Head of caudate nucleus (tissue), 42 donors: ENCODE measurements at regions of chr11 and their contacts with region 1.

Region 1: GRCh38 chr11:62394825-62395538 is 23.9 kb upstream of the SCGB1A1 start:
- DNase-seq: peak; percentile 61 to 91 (median 78)

Region 2: GRCh38 chr11:62340269-62340901 is 54.6 kb before region 1 on chr11:
- intact Hi-C with region 1: no loop called
- DNase-seq: peak; percentile 59 to 92 (median 83)

Region 3: DNA sequence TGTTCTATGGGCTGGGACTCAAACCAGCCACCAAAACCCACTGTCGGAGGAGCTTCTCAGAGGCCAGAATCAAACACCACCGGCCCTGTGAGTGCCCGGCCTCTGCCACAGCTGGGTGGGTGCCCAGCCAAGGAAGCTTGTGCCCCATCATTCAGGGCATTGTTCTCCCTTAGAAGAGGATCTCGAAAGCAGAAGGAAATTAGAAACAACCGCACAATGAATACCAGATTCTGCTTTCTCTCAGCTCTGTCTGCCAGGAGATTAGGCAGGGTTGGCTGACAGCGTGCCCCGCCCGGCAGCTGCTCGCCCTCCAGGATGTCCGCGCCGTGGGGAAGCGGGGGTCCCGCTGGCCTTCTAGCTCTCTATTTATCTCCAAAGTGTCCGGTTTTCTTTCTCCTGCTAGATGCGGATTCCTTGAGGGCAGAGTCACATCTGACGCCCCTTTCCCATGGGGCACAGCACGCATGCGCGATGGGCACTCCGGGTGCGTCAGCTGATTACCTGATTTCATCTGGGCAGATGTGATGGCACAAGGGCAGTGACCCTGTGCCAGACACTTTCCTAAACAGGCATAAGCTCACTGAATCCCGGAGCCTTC is 49.4 kb after region 1 on chr11:
- intact Hi-C with region 1: no loop called
- DNase-seq: peak; percentile 26 to 88 (median 67)

Region 4: GRCh38 chr11:62560566-62561103 is 165.7 kb after region 1 on chr11:
- intact Hi-C with region 1: no loop called
- DNase-seq: peak in 38 of 42 donors; percentile 43 to 88 (median 72)

Region 5: DNA sequence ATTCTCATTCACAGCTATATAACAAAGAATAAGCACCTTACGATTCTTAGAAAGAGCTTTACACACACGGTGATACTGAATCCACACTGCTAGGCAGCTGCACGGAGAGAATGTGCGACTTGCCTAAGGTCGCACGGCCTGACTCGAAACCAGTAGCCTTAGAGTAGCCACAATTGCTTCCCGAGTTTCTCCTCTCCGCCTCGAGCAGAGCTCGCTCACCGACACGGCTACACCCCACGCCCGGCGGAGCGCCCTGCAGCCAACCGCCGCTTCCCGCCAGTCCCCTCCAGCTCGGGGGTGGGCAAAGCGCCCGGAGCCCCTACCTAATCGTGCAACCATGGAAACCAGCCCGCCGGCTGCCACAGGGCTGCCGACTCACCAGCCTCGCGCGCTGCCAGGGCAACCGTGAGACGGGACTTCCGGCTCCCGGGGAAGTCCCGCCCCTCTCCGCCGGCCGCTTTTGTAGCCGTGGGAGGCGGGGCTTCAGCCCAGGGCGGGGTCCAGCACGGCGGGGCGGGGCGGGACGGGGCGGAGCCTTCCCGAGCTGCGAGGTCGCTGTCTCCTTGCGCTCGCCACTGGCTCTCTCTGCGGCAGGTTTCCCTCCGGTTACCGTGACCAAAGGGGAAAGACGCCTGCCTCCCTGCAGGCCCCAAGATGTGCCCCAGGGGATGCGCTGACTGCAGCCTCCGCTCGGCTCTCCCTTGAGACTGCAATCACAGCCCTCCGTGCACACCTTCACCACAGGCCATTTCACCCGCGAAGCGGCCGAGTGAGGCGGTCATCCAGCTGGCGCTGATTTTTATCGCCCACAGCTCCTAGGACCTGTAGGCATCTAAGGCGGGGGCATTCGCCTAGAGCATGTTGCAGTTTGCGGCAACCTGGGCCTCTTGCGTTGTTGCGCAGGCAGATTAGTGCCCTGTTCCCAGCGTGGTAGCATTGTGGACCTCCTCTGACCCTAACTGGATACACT is 311.2 kb after region 1 on chr11:
- intact Hi-C with region 1: loop called (anchors 10 kb)
- DNase-seq: peak; percentile 91 to 99 (median 97)